Lower lobe of right lung (tissue), 2 donors: ENCODE measurements at regions of chr14 and their contacts with region 1.

Region 1: GRCh38 chr14:61025251-61026223 is 44.5 kb downstream of the SLC38A6 start:
- DNase-seq: no peak
- ATAC-seq: peak; percentile 74 to 81
- H3K4me3 ChIP-seq: no peak overlapping the region
- H3K27ac ChIP-seq: no peak overlapping the region
- H3K4me1 ChIP-seq: peaks cover 3% of the 10 kb centered on the region
- H3K27me3 ChIP-seq: no peaks in the 10 kb centered on the region
- CTCF ChIP-seq: peak; percentile 83

Region 2: GRCh38 chr14:60622917-60623257 is 402.6 kb before region 1 on chr14:
- intact Hi-C with region 1: loop called (anchors 5 kb)
- DNase-seq: no peak
- ATAC-seq: no peak
- H3K4me3 ChIP-seq: no peak overlapping the region
- H3K27ac ChIP-seq: no peak overlapping the region
- H3K4me1 ChIP-seq: peaks cover 3% of the 10 kb centered on the region
- H3K27me3 ChIP-seq: no peaks in the 10 kb centered on the region
- CTCF ChIP-seq: no peak

Region 3: DNA sequence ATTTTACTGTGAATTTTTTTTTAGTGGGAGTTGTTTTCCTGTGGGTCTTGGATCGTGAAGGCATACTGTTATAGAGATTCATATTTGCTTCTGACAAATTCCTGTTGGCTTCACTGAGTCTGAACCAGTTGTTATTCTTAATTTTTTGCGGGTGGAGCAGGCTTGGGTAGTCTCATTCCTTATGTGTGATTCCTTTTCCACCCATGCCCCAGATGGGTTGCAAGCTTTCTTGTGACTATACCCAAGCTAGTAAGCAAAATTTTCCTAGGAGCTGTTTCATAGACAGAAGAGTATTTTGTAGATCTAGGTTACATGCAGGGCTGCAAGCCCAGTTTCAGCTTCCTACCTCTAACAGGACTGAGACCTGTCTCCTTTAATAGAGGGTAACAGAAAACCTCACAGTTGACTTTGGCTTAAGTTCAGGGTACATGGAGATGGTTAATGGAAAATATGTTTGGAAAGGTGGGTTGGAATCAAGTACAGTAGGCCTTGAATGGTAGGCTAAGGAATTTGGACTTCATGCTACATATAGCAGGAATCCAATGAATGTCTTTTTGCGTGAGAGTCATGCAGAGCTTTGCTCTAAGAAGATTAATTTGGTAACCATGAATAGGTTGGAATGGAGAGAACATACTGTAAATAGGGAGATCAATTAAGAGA is 73.6 kb before region 1 on chr14:
- intact Hi-C with region 1: no loop called
- DNase-seq: no peak
- ATAC-seq: no peak
- H3K4me3 ChIP-seq: no peak overlapping the region
- H3K27ac ChIP-seq: no peak overlapping the region
- H3K4me1 ChIP-seq: no peaks in the 10 kb centered on the region
- H3K27me3 ChIP-seq: no peaks in the 10 kb centered on the region
- CTCF ChIP-seq: no peak

Region 4: GRCh38 chr14:61925043-61925442 is 899.5 kb after region 1 on chr14:
- intact Hi-C with region 1: no loop called
- DNase-seq: no peak
- ATAC-seq: no peak
- H3K4me3 ChIP-seq: no peak overlapping the region
- H3K27ac ChIP-seq: no peak overlapping the region
- H3K4me1 ChIP-seq: no peaks in the 10 kb centered on the region
- H3K27me3 ChIP-seq: no peaks in the 10 kb centered on the region
- CTCF ChIP-seq: peak; percentile 8